CD14-positive monocyte (primary cell): ENCODE measurements at regions of chr1 and their contacts with region 1.

Region 1: GRCh38 chr1:66924756-66925557 is at the starts of genes DNAI4 and MIER1:
- DNase-seq: peak; percentile 98
- H3K4me3 ChIP-seq: peak within 1 kb of the TSS; percentile 86 to 96 (median 88)
- H3K4me3 Mint-ChIP-seq: peak within 1 kb of the TSS; percentile 95 to 97
- H3K27ac ChIP-seq: peak within 1 kb of the TSS; percentile 91 to 97
- H3K27ac Mint-ChIP-seq: peak within 1 kb of the TSS; percentile 94 to 98 (median 97)
- H3K4me1 ChIP-seq: peaks cover 25 to 35% of the 10 kb centered on the region in 2 donors
- H3K4me1 Mint-ChIP-seq: peaks cover 29% of the 10 kb centered on the region
- H3K27me3 ChIP-seq: no peaks in the 10 kb centered on the region
- H3K27me3 Mint-ChIP-seq: peaks cover 0 to 2% (median 0%) of the 10 kb centered on the region in 3 donors
- CTCF ChIP-seq: peak; percentile 8
- polyA plus RNA-seq, gene DNAI4: 0.09 TPM in 1 of 3 donors, not detected in the others
- polyA plus RNA-seq, gene MIER1: 14.0 to 28.0 (median 21.9) TPM

Region 2: GRCh38 chr1:66764994-66765578 is 159.9 kb before region 1 on chr1:
- intact Hi-C with region 1: loop called in 1 of 2 experiments (anchors 10 kb)
- DNase-seq: peak; percentile 11 to 32 (median 26)
- H3K4me3 ChIP-seq: no peak overlapping the region
- H3K4me3 Mint-ChIP-seq: no peak overlapping the region
- H3K27ac ChIP-seq: no peak overlapping the region
- H3K27ac Mint-ChIP-seq: no peak overlapping the region
- H3K4me1 ChIP-seq: peaks cover 12 to 22% of the 10 kb centered on the region in 2 donors
- H3K4me1 Mint-ChIP-seq: peaks cover 20% of the 10 kb centered on the region
- H3K27me3 ChIP-seq: no peaks in the 10 kb centered on the region
- H3K27me3 Mint-ChIP-seq: no peaks in the 10 kb centered on the region
- CTCF ChIP-seq: peak; percentile 79

Region 3: DNA sequence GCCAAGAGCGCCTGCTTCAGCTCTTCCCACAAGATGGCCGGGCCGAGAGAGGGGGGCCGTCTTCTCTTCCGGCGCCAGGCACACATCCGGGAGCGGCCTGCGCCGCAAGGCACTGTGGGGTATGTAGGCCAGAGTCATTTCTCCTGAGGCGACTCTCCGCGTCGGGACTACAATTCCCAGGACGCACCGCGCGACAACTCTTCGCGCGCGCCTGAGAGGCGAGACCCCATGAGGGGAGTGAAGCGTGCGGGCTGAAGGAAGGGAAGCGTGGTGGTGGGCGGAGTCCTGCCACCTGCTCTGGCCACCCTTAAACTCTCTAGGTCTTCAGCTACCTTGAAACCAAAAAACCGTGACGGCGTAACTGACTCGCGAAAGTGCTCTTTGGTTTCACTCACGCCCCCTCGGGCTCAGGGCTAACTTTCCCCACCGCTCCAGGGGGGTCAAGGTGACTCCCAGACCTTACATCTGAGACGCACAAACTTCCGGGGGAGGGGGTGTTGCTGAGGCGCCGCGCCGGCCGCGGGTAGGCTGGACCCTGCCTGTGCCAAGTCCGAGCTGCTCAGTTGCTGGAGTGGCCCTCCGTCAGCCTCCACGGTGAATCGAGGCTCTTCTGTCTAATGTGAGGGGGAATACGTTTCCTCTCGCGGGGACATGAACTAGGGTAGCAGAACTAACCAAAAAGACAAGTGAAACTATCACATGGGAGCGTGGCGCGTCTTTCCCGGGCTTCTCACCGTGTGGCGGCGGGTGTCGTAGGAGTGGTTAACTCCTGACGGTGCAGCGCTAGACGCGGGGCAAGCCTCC is 505.6 kb after region 1 on chr1 and contains the start of gene SERBP1:
- intact Hi-C with region 1: loop called in 1 of 2 experiments (anchors 10 kb)
- DNase-seq: peak; percentile 91 to 93 (median 92)
- H3K4me3 ChIP-seq: peak within 1 kb of the TSS; percentile 65 to 97 (median 66)
- H3K4me3 Mint-ChIP-seq: peak within 1 kb of the TSS; percentile 98 to 99
- H3K27ac ChIP-seq: peak within 1 kb of the TSS; percentile 84 to 92
- H3K27ac Mint-ChIP-seq: peak within 1 kb of the TSS; percentile 93 to 99 (median 95)
- H3K4me1 ChIP-seq: peaks cover 29 to 55% of the 10 kb centered on the region in 2 donors
- H3K4me1 Mint-ChIP-seq: peaks cover 57% of the 10 kb centered on the region
- H3K27me3 ChIP-seq: no peaks in the 10 kb centered on the region
- H3K27me3 Mint-ChIP-seq: peaks cover 0 to 2% (median 0%) of the 10 kb centered on the region in 3 donors
- CTCF ChIP-seq: no peak
- polyA plus RNA-seq, gene SERBP1: 38.2 to 78.8 (median 75.3) TPM